Prostate gland (tissue), 2 donors: ENCODE measurements at regions of chr1 and their contacts with region 1.

Region 1: GRCh38 chr1:203273206-203273868 is 32.0 kb upstream of the BTG2 start:
- DNase-seq: peak; percentile 88
- H3K4me3 ChIP-seq: peak overlapping the region in 1 of 2 donors; percentile 7
- H3K27ac ChIP-seq: peak overlapping the region; percentile 69 to 80
- H3K4me1 ChIP-seq: peaks cover 7% of the 10 kb centered on the region
- H3K27me3 ChIP-seq: no peaks in the 10 kb centered on the region
- CTCF ChIP-seq: peak; percentile 97 to 100 (median 100)
- POLR2A ChIP-seq: peak; percentile 59

Region 2: DNA sequence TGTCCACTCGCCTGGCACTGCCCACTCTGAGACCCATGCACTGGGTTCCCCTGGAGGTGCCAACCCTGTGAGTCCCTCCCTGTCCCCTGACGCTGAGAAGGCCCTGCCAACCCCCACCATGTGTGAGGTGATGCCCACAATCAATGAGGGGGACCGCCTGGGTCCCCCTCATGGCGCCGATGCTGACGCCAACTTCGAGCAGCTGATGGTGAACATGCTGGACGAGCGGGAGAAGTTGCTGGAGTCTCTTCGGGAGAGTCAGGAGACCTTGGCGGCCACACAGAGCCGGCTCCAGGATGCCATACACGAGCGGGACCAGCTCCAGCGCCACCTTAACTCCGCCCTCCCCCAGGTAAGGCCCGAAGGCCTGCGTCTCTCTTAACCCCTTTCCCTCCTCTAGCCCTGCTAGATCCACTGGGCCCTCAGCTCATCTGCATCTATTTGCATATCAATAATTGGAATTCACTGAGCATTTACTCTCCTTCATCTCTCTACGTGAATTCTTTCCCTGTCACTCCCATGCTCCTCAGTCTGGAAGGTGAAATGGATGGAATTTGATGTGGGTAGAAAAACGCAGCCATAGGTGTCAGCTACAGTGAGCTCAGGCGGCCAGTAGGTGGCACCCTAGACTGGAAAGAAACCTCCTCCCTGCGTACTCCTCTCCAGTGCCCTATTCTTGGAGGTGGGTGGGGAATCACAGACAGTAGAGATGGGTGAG is 234.3 kb before region 1 on chr1:
- intact Hi-C with region 1: loop called (anchors 5 kb)
- DNase-seq: peak; percentile 66
- H3K4me3 ChIP-seq: no peak overlapping the region
- H3K27ac ChIP-seq: no peak overlapping the region
- H3K4me1 ChIP-seq: no peaks in the 10 kb centered on the region
- H3K27me3 ChIP-seq: peaks cover 2% of the 10 kb centered on the region
- CTCF ChIP-seq: peak; percentile 67 to 90 (median 80)
- POLR2A ChIP-seq: no peak

Region 3: GRCh38 chr1:203306089-203306966 is 33.0 kb after region 1 on chr1:
- intact Hi-C with region 1: loop called (anchors 2 kb)
- DNase-seq: peak; percentile 98
- H3K4me3 ChIP-seq: peak overlapping the region; percentile 100
- H3K27ac ChIP-seq: peak overlapping the region; percentile 99
- H3K4me1 ChIP-seq: peaks cover 7% of the 10 kb centered on the region
- H3K27me3 ChIP-seq: no peaks in the 10 kb centered on the region
- CTCF ChIP-seq: peak in 2 of 4 experiments; percentile 44 to 67
- POLR2A ChIP-seq: peak; percentile 79

Region 4: DNA sequence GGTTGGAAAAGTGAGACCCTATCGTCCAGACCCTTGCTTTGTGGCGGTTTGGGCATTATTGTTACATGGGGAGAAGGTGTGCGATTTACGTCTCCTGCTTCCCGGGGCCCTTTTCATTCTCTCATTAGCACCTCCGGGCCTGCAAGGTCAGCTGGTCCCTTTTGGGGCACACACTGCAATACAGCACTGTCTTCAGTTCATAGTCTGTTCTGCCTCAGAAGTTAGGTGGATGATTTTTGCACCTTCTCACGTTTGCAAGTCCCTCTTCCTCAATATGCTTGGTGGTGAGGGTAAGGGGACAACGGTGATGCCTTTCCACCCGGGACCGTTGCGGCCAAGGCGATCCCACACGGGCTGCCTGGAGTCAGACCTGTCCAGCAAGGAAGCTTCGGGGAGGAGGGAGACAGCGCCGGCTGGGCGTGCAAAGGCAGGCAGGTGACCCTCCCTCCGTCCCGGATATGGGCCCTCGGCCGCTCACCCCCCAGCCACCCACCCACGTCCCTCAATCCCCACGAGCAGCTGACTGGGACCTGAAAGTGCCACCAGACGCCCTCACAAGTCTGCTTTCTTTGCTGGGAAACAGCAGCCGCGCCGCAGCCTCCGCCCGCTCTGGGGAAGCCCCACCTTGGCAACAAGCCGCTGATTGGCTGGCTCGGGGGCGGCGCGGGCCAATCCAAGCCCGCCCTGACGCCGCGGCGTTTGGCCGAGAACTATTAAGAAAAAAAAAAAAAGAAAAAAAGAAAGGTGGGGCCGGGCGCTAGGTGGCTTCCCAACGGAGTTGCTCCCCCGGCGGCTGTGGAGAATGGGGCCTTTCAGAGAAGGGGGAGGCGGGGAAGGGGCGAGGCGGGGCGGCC is 53.7 kb after region 1 on chr1:
- intact Hi-C with region 1: loop called (anchors 5 kb)
- DNase-seq: peak; percentile 97
- H3K4me3 ChIP-seq: peak overlapping the region; percentile 32 to 34
- H3K27ac ChIP-seq: peak overlapping the region; percentile 96 to 99
- H3K4me1 ChIP-seq: peaks cover 43% of the 10 kb centered on the region
- H3K27me3 ChIP-seq: no peaks in the 10 kb centered on the region
- CTCF ChIP-seq: no peak
- POLR2A ChIP-seq: peak; percentile 87

Region 5: DNA sequence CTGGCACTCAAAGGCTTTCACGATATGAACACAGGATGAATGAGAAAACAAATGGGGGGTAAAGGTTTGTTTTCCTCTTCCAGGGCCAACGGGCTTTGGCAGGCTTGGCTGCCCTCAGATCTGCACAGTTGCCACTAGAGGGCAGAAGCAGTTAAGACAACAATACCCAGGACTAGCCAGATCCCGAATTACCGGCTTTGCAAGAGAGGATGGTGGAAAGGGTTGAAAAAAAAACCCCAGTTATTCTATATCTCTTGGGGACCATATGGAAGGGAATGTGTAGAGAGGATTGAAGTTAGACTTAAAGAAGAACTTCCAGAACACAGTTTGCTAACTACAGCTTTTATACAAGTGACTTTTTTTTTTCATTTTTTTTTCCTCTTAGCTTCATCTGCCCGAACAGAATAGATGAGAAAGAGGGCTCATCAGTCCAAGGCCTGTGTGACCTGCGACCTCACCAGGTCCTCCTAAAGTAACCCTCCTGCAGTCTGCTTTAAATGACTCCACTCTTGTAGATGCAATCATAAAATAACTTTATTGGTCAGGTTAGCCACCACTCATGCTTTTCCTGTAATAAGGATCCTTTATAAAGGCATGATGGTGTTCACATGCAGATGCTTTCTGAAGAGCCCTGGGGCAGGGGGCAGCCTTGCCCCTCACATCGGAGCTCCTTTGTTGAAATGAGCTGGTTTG is 66.9 kb after region 1 on chr1:
- intact Hi-C with region 1: loop called (anchors 2 kb)
- DNase-seq: peak; percentile 85
- H3K4me3 ChIP-seq: no peak overlapping the region
- H3K27ac ChIP-seq: peak overlapping the region; percentile 50 to 62
- H3K4me1 ChIP-seq: peaks cover 8% of the 10 kb centered on the region
- H3K27me3 ChIP-seq: no peaks in the 10 kb centered on the region
- CTCF ChIP-seq: peak; percentile 70 to 97 (median 94)
- POLR2A ChIP-seq: no peak

Region 6: DNA sequence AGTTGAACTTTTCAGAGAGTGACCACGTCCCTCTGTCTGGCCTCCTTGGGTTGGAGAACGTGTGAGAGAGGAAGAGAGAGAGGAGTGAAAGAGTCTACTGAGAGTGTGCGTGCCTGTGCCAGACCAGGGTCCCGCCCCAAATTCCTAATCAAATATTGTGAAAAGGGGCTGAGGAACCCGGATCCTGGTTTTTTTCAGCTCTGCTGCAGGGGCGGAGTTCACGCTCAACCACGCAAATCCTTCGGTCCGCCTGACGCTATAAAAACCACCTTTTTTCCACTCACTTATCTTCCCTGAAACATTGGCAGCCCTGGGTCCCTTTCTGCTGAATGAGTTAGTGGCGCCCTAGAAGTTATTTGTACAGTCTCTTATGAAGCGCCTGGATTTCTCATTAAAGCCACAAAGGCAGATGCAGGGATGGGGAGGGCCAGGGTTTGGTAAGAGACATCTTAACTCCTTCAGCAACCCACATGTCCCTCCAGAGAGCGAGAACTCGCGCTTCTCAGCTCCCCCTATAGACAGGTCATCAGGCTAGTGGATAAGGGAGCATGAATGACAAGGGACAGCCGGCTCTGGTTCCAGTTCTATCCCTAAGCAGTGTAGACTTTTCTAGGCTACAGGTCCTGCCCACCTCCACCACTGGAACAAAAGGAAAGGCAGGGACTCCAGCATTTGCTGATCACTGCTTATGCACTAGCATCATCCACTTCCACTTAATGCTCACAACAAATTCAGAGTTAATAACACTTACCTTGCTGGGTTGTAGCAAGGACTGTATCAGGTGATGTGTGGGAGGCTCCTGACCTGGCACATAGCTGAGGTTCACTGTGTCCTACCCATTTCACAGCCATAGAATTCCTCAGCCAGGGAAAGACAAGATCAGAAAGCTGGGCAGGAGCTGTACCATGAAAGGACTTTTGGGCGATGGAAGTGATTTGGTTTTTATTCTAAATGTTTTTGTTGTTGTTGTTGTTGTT is 78.0 kb after region 1 on chr1 and contains the start of gene FMOD:
- intact Hi-C with region 1: no loop called
- DNase-seq: peak; percentile 55
- H3K4me3 ChIP-seq: peak within 1 kb of the TSS; percentile 15 to 27
- H3K27ac ChIP-seq: peak within 1 kb of the TSS; percentile 54 to 71
- H3K4me1 ChIP-seq: no peaks in the 10 kb centered on the region
- H3K27me3 ChIP-seq: no peaks in the 10 kb centered on the region
- CTCF ChIP-seq: no peak
- POLR2A ChIP-seq: no peak
- total RNA-seq, gene FMOD: 40.8 to 95.9 TPM

Region 7: DNA sequence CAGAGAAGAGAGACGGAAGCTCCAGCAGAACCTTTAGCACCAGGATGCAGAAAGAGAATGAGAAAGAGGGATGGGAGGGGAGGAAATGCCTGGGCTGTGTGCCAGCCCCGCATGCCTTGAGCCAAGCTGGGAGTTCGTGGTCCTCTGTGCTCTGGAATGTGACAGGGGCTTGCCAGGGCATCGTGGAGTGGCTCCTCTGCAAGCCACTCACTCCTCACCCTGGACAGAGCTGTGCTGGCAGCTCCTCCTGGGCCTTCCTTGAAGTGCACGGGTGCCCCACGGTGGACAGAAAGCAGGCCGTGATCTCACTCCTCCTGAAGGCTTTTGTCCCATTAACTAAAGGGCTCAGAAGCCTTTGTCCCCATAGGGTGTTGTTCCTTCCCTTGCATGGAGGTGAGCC is 167.4 kb after region 1 on chr1:
- intact Hi-C with region 1: loop called (anchors 5 kb)
- DNase-seq: peak; percentile 76
- H3K4me3 ChIP-seq: no peak overlapping the region
- H3K27ac ChIP-seq: peak overlapping the region; percentile 13 to 31
- H3K4me1 ChIP-seq: no peaks in the 10 kb centered on the region
- H3K27me3 ChIP-seq: no peaks in the 10 kb centered on the region
- CTCF ChIP-seq: peak; percentile 42 to 88 (median 67)
- POLR2A ChIP-seq: no peak

Region 8: DNA sequence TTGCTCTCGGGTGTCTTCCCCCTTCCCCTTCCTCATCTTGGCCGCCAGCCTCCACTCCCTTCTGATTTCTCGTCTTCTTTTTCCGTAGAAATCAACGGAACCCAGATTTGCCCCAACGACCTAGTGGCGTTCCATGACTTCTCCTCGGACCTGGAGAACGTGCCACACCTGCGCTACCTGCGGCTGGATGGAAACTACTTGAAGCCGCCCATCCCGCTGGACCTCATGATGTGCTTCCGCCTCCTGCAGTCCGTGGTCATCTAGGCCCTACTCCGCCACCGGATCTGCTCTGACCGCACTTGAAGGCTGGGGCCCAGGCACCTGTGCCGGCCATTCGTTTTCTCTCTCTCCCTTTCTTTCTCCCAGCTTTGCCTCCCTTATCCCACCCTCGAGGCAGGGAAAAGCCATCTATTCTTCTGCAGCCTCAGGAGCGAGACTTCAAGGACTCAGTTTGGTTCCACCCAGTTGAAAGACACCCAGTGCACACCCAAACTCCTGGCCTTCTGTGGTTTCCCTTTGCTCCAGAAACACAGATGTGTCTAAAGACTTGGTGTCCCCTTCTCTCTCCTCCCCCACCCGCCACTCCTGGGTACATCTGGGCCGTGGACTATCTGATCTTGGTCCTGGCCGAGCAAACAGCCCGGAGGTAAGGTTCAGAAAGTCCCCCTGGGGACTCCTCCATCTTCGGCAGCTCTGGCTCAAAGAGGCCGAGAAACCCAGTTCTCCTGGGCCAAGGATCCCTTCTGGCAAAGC is 213.5 kb after region 1 on chr1:
- intact Hi-C with region 1: loop called (anchors 5 kb)
- DNase-seq: no peak
- H3K4me3 ChIP-seq: no peak overlapping the region
- H3K27ac ChIP-seq: peak overlapping the region; percentile 64 to 65
- H3K4me1 ChIP-seq: no peaks in the 10 kb centered on the region
- H3K27me3 ChIP-seq: no peaks in the 10 kb centered on the region
- CTCF ChIP-seq: no peak
- POLR2A ChIP-seq: no peak